ENCODE measurements at regions of chr5 and their contacts with region 1.

Region 1: GRCh38 chr5:72366324-72366976 is 46.3 kb downstream of the PTCD2 start:
- DNase-seq: peak; percentile 81
- H3K4me3 ChIP-seq: no peak overlapping the region
- H3K27ac ChIP-seq: no peak overlapping the region
- H3K4me1 ChIP-seq: peaks cover 0 to 22% (median 8%) of the 10 kb centered on the region in 4 donors
- H3K27me3 ChIP-seq: no peaks in the 10 kb centered on the region
- CTCF ChIP-seq: peak; percentile 67 to 77 (median 74)
- EP300 ChIP-seq: no peak
- POLR2A ChIP-seq: no peak

Region 2: DNA sequence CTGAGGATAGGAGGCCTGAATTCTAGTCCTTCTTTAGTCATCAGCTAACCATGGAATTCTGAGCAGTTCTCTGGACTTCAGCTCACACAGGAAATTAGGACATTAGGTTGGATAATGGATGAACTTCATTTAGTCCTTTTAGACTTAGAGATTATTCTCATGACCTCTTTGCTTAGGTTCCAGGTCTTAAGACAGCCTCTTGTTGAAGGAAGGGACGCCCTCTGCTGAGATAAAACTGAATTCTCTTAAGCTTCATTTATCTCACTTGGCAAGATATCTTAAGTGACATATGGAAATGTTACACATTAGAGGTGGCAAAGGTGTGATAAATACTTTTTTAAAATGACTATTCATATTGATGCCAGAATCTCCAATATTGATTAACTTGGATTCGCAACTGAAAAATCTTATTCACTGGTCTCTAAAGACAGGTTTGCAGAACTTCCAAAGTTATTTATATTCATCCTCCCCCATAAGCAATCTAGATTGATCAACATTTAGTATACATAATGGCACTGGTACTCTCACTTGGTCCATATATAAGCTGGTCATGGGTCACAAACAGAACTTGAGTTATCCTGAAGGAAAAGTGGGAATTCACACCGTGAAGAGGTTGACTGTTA is 157.6 kb after region 1 on chr5:
- intact Hi-C with region 1: loop called (anchors 5 kb)
- DNase-seq: no peak
- H3K4me3 ChIP-seq: no peak overlapping the region
- H3K27ac ChIP-seq: no peak overlapping the region
- H3K4me1 ChIP-seq: no peaks in the 10 kb centered on the region
- H3K27me3 ChIP-seq: no peaks in the 10 kb centered on the region
- CTCF ChIP-seq: peak in 3 of 4 experiments; percentile 33 to 57 (median 51)
- EP300 ChIP-seq: no peak
- POLR2A ChIP-seq: no peak

Region 3: DNA sequence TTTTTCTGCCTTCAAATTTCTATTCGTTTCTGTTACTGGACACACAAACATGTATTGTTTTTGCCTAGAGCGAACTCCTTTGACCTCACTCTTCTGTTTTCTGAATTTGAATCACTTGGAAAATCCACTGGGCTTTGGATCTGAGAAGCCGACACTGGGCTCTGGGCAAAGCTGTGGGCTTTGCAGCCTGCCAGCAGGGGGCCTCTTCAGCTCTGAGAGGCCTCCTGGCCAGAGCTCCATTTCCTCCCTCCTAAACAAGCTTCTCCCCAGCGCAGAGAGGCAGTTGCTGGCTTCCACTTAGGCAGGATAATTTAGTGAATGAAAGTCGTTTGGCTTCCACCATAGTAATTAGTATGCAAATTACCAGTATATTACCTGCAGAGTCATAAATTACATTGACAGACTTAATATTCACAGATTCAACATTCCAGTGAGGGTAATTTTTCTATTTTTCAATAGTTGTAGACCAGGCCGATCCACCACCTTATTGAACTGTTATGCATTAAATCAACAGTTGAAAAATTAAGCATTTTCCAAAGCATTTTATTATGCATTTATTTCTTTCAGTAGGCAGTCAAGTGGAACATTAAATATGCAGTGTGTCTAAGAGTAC is 244.8 kb after region 1 on chr5:
- intact Hi-C with region 1: loop called (anchors 10 kb)
- DNase-seq: peak; percentile 88
- H3K4me3 ChIP-seq: no peak overlapping the region
- H3K27ac ChIP-seq: no peak overlapping the region
- H3K4me1 ChIP-seq: peaks cover 2 to 19% (median 10%) of the 10 kb centered on the region in 4 donors
- H3K27me3 ChIP-seq: no peaks in the 10 kb centered on the region
- CTCF ChIP-seq: peak; percentile 75 to 95 (median 86)
- EP300 ChIP-seq: no peak
- POLR2A ChIP-seq: no peak